Activated naive CD4-positive, alpha-beta T cell treated with anti-CD3 and anti-CD28 coated beads for 36 hours (primary cell): ENCODE measurements at regions of chrX and their contacts with region 1.

Region 1: DNA sequence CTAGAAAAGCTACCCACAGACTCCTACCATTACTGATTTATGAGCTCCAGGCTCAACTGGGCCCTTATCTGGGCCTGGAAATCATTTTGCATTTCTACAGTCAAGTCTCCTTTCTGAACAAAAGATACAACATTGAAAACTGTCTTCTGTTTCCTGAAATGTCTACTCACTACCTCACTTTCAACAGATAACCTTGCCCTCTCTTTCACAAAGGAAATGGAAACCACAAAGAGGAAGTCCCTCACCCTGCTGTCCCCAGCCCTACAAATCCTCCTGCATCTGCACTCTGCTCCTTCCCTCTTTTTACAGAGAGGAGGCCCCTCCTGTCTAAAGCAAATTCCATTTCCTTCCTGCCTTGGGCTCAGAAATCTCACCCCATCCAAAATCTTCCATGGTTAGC is 24.8 kb upstream of the CYBB start:
- DNase-seq: peak; percentile 12
- H3K4me3 Mint-ChIP-seq: no peak overlapping the region
- H3K27ac Mint-ChIP-seq: no peak overlapping the region
- H3K4me1 Mint-ChIP-seq: peaks cover 25% of the 10 kb centered on the region
- H3K27me3 Mint-ChIP-seq: no peaks in the 10 kb centered on the region

Region 2: DNA sequence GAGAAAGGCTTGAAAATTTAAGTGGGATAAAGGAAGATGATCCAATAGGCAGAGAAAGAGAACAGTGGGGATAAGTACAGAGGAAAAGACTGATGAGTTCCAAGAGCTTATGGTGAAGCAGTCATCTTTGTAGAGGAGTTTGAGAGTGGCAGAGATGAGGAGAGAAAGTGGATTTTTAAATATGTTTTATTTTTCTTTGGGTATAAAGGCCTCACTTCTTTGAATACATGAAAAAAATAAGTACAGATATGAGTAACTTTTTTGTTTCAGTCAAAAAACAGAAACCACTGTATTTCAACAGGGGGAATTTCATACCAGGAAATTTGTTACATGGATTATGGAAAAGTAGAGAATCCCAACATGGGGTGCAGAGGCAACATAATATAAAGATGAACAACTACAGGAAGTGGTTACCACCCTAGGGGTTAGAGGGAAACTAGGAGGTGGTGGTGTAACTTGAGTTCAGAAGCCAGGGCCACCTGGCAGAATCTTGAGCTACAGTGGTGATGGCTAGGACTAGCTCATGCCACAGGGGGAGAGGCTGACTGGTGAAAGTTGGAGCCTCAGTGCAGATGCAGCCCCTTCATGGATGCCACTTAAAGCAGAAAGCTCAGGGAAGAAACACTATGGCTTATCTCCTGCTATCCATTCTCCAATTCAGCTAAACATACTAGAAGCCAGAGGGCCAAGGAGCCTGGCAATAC is 21.4 kb after region 1 on chrX:
- CTCF ChIA-PET with region 1: no interaction called
- intact Hi-C with region 1: loop called (anchors 1 kb)
- DNase-seq: peak; percentile 27
- H3K4me3 Mint-ChIP-seq: no peak overlapping the region
- H3K27ac Mint-ChIP-seq: no peak overlapping the region
- H3K4me1 Mint-ChIP-seq: peaks cover 20% of the 10 kb centered on the region
- H3K27me3 Mint-ChIP-seq: no peaks in the 10 kb centered on the region

Region 3: GRCh38 chrX:37796805-37797204 is 41.8 kb after region 1 on chrX:
- CTCF ChIA-PET with region 1: no interaction called
- intact Hi-C with region 1: loop called (anchors 2 kb)
- DNase-seq: peak; percentile 14
- H3K4me3 Mint-ChIP-seq: no peak overlapping the region
- H3K27ac Mint-ChIP-seq: no peak overlapping the region
- H3K4me1 Mint-ChIP-seq: peaks cover 18% of the 10 kb centered on the region
- H3K27me3 Mint-ChIP-seq: no peaks in the 10 kb centered on the region

Region 4: DNA sequence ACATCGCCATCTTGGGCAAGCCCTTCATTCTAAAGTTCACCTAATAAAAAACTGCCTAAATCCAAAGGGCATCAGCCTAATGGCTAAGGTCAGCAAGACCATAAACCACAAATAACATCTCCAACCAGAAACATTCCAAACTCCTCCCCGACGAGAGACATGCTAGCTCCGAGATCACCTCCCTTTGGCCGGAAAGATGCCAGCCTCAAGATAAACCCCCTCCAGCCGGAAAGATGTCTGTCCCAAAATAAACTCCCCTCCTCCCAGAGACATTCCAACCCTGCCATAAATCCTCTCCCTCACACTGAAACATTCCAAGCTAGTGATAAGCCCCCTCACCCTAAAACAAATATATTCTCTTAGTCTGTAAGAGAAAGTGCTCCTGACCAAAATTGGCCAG is 105.7 kb after region 1 on chrX:
- CTCF ChIA-PET with region 1: no interaction called
- intact Hi-C with region 1: no loop called
- DNase-seq: no peak
- H3K4me3 Mint-ChIP-seq: no peak overlapping the region
- H3K27ac Mint-ChIP-seq: no peak overlapping the region
- H3K4me1 Mint-ChIP-seq: no peaks in the 10 kb centered on the region
- H3K27me3 Mint-ChIP-seq: no peaks in the 10 kb centered on the region